CD4-positive, alpha-beta memory T cell (primary cell): ENCODE measurements at regions of chr10 and their contacts with region 1.

Region 1: DNA sequence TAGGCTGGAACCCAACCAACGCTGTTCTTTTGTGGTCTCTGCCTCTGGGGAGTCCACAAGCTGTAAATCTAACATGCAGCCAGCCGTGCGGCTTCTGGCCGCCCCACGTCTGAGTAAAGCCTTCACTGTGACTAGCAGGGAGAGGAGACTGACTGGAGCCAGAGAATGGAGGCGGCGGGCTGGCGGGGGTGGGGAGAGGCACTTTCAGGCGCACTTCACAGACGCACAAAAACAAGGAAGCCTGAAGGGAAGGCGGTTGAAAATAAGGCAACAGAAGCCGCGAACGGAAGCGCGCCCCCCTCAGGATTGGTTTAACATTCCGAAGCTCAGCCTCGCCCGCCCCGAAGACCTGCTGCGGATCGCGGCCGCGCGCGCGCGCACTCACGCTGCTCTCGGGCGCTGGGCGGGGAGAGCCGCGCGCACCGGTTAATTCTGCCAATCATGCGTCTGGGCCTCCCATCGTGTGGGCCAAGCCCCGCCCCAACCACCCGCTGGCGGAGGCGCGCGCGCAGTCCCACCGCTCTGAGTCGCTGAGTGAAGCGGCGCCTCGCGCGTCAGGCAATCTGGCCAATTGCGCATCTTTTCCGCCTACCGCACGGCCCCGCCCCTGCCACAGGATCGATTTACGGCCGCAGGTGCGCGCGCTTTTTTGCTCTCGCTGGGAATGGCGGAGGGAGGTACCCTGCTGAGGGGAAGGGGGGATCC is at the start of gene SFR1:
- DNase-seq: peak; percentile 99 to 100 (median 99)
- H3K4me3 ChIP-seq: peak within 1 kb of the TSS; percentile 80 to 98
- H3K4me3 Mint-ChIP-seq: peak within 1 kb of the TSS; percentile 94 to 98 (median 96)
- H3K27ac ChIP-seq: peak within 1 kb of the TSS; percentile 100
- H3K27ac Mint-ChIP-seq: peak within 1 kb of the TSS; percentile 99 to 100 (median 100)
- H3K4me1 ChIP-seq: peaks cover 21% of the 10 kb centered on the region
- H3K4me1 Mint-ChIP-seq: peaks cover 9 to 40% (median 20%) of the 10 kb centered on the region in 4 donors
- H3K27me3 ChIP-seq: no peaks in the 10 kb centered on the region
- H3K27me3 Mint-ChIP-seq: peaks cover 0 to 4% of the 10 kb centered on the region in 2 donors
- total RNA-seq, gene SFR1: 12.2 to 12.4 TPM

Region 2: DNA sequence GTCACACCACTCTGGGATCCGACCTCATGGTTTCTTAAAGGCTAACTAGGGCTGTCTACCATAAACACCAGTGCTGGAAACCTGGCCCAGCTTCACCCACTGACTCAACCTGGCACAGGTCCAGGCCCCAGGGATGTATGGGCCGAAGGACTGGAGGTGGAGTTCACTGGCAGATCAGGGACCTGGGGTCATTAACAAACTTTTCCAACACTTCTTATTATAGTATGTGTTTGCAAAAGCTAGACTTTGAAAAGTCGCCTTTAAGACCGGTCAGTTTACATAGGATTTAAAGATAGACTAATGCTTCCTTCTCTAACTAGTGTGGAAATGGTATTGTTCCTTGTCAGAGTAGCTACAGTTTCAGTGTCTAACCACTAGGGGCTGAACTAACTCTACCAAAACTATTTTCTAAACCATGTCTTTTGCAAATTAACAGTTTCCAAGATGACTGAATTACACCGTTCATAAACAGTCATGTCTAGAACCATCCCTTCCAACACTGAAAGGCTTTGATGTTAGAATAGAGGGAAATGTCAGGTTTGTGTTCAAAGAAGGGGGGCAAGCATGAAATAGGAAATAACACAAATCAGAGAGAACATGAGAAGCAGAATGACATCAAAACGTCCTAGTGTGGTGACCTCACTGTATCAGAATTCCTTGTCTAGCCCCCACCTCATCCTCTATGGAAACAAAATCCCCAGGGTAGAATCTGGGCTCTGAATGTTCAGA is 233.4 kb before region 1 on chr10:
- CTCF ChIA-PET with region 1: interaction called, 59 read pairs
- POLR2A ChIA-PET with region 1: interaction called, 30 read pairs
- intact Hi-C with region 1: loop called (anchors 1 kb)
- DNase-seq: peak; percentile 43 to 67 (median 66)
- H3K4me3 ChIP-seq: no peak overlapping the region
- H3K4me3 Mint-ChIP-seq: peak overlapping the region in 2 of 8 donors; percentile 40 to 49
- H3K27ac ChIP-seq: peak overlapping the region; percentile 11
- H3K27ac Mint-ChIP-seq: peak overlapping the region in 6 of 7 donors; percentile 36 to 85 (median 68)
- H3K4me1 ChIP-seq: peaks cover 22% of the 10 kb centered on the region
- H3K4me1 Mint-ChIP-seq: peaks cover 16 to 43% (median 29%) of the 10 kb centered on the region in 4 donors
- H3K27me3 ChIP-seq: no peaks in the 10 kb centered on the region
- H3K27me3 Mint-ChIP-seq: no peaks in the 10 kb centered on the region

Region 3: GRCh38 chr10:103911021-103911459 is 210.6 kb before region 1 on chr10:
- CTCF ChIA-PET with region 1: interaction called, 9 read pairs
- POLR2A ChIA-PET with region 1: interaction called, 55 read pairs
- intact Hi-C with region 1: loop called (anchors 2 kb)
- DNase-seq: peak; percentile 76 to 86 (median 82)
- H3K4me3 ChIP-seq: peak overlapping the region; percentile 22 to 28
- H3K4me3 Mint-ChIP-seq: peak overlapping the region; percentile 76 to 92 (median 82)
- H3K27ac ChIP-seq: peak overlapping the region; percentile 60
- H3K27ac Mint-ChIP-seq: peak overlapping the region; percentile 92 to 99 (median 97)
- H3K4me1 ChIP-seq: peaks cover 95% of the 10 kb centered on the region
- H3K4me1 Mint-ChIP-seq: peaks cover 57 to 80% (median 67%) of the 10 kb centered on the region in 4 donors
- H3K27me3 ChIP-seq: no peaks in the 10 kb centered on the region
- H3K27me3 Mint-ChIP-seq: no peaks in the 10 kb centered on the region

Region 4: GRCh38 chr10:103966671-103967447 is 154.8 kb before region 1 on chr10 and contains the start of gene SLK:
- CTCF ChIA-PET with region 1: interaction called, 6 read pairs
- POLR2A ChIA-PET with region 1: interaction called, 54 read pairs
- intact Hi-C with region 1: loop called (anchors 1 kb)
- DNase-seq: peak; percentile 78 to 90 (median 86)
- H3K4me3 ChIP-seq: peak within 1 kb of the TSS; percentile 59 to 99
- H3K4me3 Mint-ChIP-seq: peak within 1 kb of the TSS; percentile 94 to 100 (median 98)
- H3K27ac ChIP-seq: peak within 1 kb of the TSS; percentile 74
- H3K27ac Mint-ChIP-seq: peak within 1 kb of the TSS; percentile 95 to 98 (median 96)
- H3K4me1 ChIP-seq: peaks cover 33% of the 10 kb centered on the region
- H3K4me1 Mint-ChIP-seq: peaks cover 27 to 48% (median 36%) of the 10 kb centered on the region in 4 donors
- H3K27me3 ChIP-seq: no peaks in the 10 kb centered on the region
- H3K27me3 Mint-ChIP-seq: no peaks in the 10 kb centered on the region
- total RNA-seq, gene SLK: 30.9 to 31.1 TPM

Region 5: GRCh38 chr10:104028146-104028545 is 93.5 kb before region 1 on chr10:
- CTCF ChIA-PET with region 1: interaction called, 4 read pairs
- POLR2A ChIA-PET with region 1: interaction called, 3 read pairs
- intact Hi-C with region 1: loop called (anchors 5 kb)
- DNase-seq: peak in 2 of 5 donors; percentile 8 to 20
- H3K4me3 ChIP-seq: no peak overlapping the region
- H3K4me3 Mint-ChIP-seq: no peak overlapping the region
- H3K27ac ChIP-seq: no peak overlapping the region
- H3K27ac Mint-ChIP-seq: peak overlapping the region in 4 of 7 donors; percentile 11 to 89 (median 44)
- H3K4me1 ChIP-seq: no peaks in the 10 kb centered on the region
- H3K4me1 Mint-ChIP-seq: peaks cover 3 to 8% (median 4%) of the 10 kb centered on the region in 4 donors
- H3K27me3 ChIP-seq: no peaks in the 10 kb centered on the region
- H3K27me3 Mint-ChIP-seq: no peaks in the 10 kb centered on the region

Region 6: DNA sequence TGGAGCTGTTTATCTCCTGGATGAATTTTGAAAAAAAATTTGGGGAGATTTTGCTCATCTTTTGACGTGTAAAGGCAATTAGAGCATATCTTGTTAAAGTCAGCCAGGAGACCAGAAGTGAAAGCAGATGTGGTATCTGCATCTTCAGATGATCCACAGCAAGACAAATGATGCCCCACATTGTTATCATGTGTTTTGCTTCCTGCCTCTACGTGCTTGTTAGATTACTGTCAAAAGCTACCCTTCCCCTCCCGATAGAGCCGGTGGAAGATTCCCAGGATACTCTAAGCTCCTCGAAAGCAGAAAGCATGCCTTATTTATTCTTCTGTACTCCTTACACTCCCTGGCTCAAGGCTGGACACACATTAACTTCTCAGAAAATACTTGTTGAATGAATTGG is 48.9 kb before region 1 on chr10:
- CTCF ChIA-PET with region 1: no interaction called
- POLR2A ChIA-PET with region 1: no interaction called
- intact Hi-C with region 1: no loop called
- DNase-seq: no peak
- H3K4me3 ChIP-seq: no peak overlapping the region
- H3K4me3 Mint-ChIP-seq: no peak overlapping the region
- H3K27ac ChIP-seq: no peak overlapping the region
- H3K27ac Mint-ChIP-seq: peak overlapping the region in 1 of 7 donors; percentile 21
- H3K4me1 ChIP-seq: no peaks in the 10 kb centered on the region
- H3K4me1 Mint-ChIP-seq: peaks cover 0 to 4% (median under 1%) of the 10 kb centered on the region in 4 donors
- H3K27me3 ChIP-seq: no peaks in the 10 kb centered on the region
- H3K27me3 Mint-ChIP-seq: no peaks in the 10 kb centered on the region

Region 7: GRCh38 chr10:104223304-104223703 is 101.6 kb after region 1 on chr10:
- CTCF ChIA-PET with region 1: no interaction called
- POLR2A ChIA-PET with region 1: no interaction called
- intact Hi-C with region 1: no loop called
- DNase-seq: no peak
- H3K4me3 ChIP-seq: no peak overlapping the region
- H3K4me3 Mint-ChIP-seq: no peak overlapping the region
- H3K27ac ChIP-seq: no peak overlapping the region
- H3K27ac Mint-ChIP-seq: no peak overlapping the region
- H3K4me1 ChIP-seq: no peaks in the 10 kb centered on the region
- H3K4me1 Mint-ChIP-seq: peaks cover 0 to 3% (median 0%) of the 10 kb centered on the region in 4 donors
- H3K27me3 ChIP-seq: no peaks in the 10 kb centered on the region
- H3K27me3 Mint-ChIP-seq: peaks cover 12 to 19% of the 10 kb centered on the region in 2 donors

Region 8: GRCh38 chr10:104242545-104242944 is 120.9 kb after region 1 on chr10:
- CTCF ChIA-PET with region 1: no interaction called
- POLR2A ChIA-PET with region 1: no interaction called
- intact Hi-C with region 1: no loop called
- DNase-seq: no peak
- H3K4me3 ChIP-seq: no peak overlapping the region
- H3K4me3 Mint-ChIP-seq: no peak overlapping the region
- H3K27ac ChIP-seq: no peak overlapping the region
- H3K27ac Mint-ChIP-seq: no peak overlapping the region
- H3K4me1 ChIP-seq: no peaks in the 10 kb centered on the region
- H3K4me1 Mint-ChIP-seq: no peaks in the 10 kb centered on the region
- H3K27me3 ChIP-seq: peaks cover 7% of the 10 kb centered on the region
- H3K27me3 Mint-ChIP-seq: peaks cover 14 to 15% of the 10 kb centered on the region in 2 donors

Region 9: GRCh38 chr10:104254493-104255310 is 133.0 kb after region 1 on chr10 and contains the start of gene GSTO1:
- CTCF ChIA-PET with region 1: interaction called, 6 read pairs
- POLR2A ChIA-PET with region 1: interaction called, 19 read pairs
- intact Hi-C with region 1: no loop called
- DNase-seq: peak in 4 of 5 donors; percentile 22 to 62 (median 31)
- H3K4me3 ChIP-seq: peak within 1 kb of the TSS; percentile 45 to 56
- H3K4me3 Mint-ChIP-seq: peak within 1 kb of the TSS; percentile 84 to 99 (median 98)
- H3K27ac ChIP-seq: peak within 1 kb of the TSS; percentile 75
- H3K27ac Mint-ChIP-seq: peak within 1 kb of the TSS; percentile 82 to 98 (median 96)
- H3K4me1 ChIP-seq: peaks cover 46% of the 10 kb centered on the region
- H3K4me1 Mint-ChIP-seq: peaks cover 36 to 54% (median 44%) of the 10 kb centered on the region in 4 donors
- H3K27me3 ChIP-seq: no peaks in the 10 kb centered on the region
- H3K27me3 Mint-ChIP-seq: peaks cover 0 to 2% of the 10 kb centered on the region in 2 donors
- total RNA-seq, gene GSTO1: 52.8 to 54.7 TPM

Region 10: DNA sequence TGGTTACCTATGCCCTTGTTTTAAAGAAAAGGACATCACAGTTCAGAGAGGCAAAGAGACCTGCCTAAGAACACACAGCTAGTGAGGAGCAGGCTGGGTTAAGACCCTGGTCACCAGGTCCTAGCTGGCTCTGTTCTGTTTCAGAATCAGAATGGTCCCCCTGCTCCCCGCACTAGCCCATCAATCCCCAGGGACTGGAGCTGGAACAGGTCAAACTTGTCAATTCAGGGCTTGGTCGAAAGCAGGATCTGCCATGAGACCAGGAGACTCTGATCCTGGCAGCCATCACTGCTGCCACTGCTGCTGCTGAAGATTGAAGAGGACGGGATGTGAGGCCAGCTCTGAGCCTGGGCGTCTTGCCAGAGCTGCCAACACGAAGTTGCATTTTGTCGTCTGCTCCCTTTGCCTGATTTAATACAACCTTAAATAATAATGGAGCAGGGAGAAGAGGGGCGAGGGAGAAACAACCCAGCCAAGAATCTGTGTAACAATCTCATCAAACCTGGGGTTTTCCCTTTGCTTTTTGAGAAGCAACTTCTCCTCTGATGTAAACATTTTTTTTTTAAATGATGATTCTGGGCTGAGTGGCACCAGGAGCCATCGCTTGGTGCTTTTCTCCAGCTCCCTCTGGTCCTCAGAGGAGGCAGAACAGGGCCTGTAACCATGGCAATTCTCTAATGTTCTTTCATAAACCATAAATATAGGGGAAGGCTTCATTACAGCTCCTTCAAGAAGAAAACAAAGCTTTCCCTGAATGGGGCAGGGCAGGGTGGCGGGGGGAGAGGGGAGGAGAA is 400.4 kb after region 1 on chr10:
- CTCF ChIA-PET with region 1: no interaction called
- POLR2A ChIA-PET with region 1: no interaction called
- intact Hi-C with region 1: no loop called
- DNase-seq: no peak
- H3K4me3 ChIP-seq: no peak overlapping the region
- H3K4me3 Mint-ChIP-seq: no peak overlapping the region
- H3K27ac ChIP-seq: no peak overlapping the region
- H3K27ac Mint-ChIP-seq: no peak overlapping the region
- H3K4me1 ChIP-seq: no peaks in the 10 kb centered on the region
- H3K4me1 Mint-ChIP-seq: no peaks in the 10 kb centered on the region
- H3K27me3 ChIP-seq: no peaks in the 10 kb centered on the region
- H3K27me3 Mint-ChIP-seq: peaks cover 11 to 13% of the 10 kb centered on the region in 2 donors